ENCODE measurements at regions of chr11 and their contacts with region 1.

Region 1: DNA sequence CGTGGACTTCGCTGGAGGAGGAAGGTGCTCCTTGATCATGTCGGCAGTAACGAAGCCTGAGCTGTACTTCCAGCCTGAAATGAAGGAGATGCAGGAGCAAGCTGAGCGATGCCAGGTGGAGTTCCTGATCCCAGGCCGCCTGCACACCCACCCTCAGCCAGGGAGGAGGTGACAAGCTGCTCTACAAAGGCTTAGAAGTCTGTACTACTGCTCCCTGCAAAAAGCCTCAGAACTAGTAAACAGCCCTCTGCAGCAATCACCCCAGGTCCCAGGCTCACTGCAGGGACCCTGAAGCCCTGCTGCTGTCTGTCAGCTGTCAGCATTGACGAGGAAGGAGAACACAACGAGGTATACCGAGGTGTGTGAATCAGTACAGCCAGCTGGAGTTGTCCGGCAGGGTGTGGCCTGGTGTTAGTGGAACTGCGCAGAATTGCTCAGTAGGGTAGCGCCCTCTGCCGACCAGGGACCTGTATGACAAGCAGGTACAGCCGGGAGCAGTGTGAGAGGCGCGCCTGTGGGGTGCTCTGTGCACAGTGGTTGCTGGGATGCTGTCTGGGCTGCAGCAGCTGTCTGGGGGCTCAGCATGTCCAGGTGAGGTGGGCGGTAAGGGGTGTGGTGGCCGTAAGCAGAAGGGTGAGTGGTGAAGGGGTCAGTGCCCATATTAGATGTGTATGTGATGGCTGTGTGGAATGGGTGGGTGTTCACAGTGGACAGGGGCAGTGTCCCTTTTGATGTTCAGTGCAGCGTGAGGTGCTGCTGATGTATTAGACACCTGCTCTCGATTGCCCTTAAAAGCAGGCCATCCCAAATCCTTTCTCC is 7.6 kb downstream of the CYB5R2 start:
- DNase-seq: peak; percentile 85 to 92
- ATAC-seq: peak; percentile 94 to 99
- H3K4me3 ChIP-seq: no peak overlapping the region
- H3K27ac ChIP-seq: peak overlapping the region in 1 of 2 experiments; percentile 60; a peak in 3 of 6 replicates
- H3K4me1 ChIP-seq: peaks cover 4% of the 10 kb centered on the region; the same call in 2 of the 3 replicates
- CTCF ChIP-seq: peak; percentile 83
- EP300 ChIP-seq: no peak
- POLR2A ChIP-seq: no peak
- RAD21 ChIP-seq: peak; percentile 93 to 96

Region 2: DNA sequence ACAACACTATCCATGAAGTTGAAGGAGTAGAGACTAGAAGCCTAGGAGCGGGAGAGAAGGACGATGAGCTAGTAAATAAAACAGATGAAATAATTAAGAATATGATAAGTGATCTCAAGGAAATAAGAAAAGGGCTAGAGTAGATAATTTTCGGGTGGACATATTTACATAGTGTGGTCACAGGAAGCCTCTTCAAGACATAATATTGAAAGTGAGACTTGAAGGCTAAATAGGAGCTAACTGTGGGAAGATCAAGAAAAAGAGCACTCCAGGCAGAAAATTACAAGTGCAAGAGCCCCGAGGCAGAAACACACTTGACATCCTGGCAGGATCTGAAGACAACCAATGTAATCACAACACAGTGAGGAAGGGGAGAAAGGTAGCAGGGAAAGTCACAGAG is 163.8 kb before region 1 on chr11:
- CTCF ChIA-PET with region 1: interaction called, 10 read pairs
- POLR2A ChIA-PET with region 1: no interaction called
- DNase-seq: no peak
- ATAC-seq: no peak
- H3K4me3 ChIP-seq: no peak overlapping the region
- H3K27ac ChIP-seq: no peak overlapping the region
- H3K4me1 ChIP-seq: no peaks in the 10 kb centered on the region
- CTCF ChIP-seq: no peak
- EP300 ChIP-seq: no peak
- POLR2A ChIP-seq: no peak
- RAD21 ChIP-seq: no peak

Region 3: DNA sequence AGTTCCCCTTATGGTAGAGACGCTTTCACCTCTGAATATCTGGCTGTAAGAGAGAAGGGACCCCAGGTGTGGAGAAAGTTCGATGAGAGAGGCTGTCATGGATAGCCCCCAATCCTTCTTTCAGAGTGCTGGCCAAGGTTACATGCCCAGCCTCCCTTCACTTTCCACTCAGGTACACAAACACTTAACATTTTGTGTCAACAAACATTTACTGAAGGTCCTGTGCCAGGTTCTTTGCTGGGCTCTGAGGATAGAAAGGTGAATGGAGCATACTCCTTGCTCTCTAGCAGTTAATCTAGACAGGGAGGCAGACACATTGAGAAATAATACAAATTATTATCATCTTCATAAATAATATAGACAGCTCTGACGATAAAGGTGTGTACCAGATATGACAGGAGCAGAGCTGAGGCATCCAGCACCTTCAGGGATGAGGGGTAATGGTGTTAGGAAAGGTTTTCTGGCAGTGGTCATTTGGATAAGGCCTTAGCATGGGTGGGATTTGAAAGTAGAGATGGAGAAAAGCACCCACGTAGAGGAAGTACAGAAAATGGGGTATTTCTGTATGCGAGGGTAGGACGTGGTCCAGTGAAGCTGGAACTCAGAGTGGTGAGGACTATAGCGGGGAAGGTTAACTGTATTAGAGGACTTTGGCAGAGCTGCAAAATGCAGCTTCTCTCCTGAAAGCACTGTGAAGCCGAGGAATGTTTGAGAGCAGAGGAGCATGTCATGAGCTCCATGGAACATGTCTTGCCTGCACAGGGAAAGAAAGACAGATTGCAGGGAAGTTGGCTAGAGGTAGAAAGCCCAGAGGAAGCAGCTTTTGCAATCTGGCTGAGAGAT is 132.3 kb before region 1 on chr11:
- CTCF ChIA-PET with region 1: interaction called, 11 read pairs
- POLR2A ChIA-PET with region 1: no interaction called
- DNase-seq: no peak
- ATAC-seq: no peak
- H3K4me3 ChIP-seq: no peak overlapping the region
- H3K27ac ChIP-seq: no peak overlapping the region
- H3K4me1 ChIP-seq: no peaks in the 10 kb centered on the region
- CTCF ChIP-seq: no peak
- EP300 ChIP-seq: no peak
- POLR2A ChIP-seq: no peak
- RAD21 ChIP-seq: no peak

Region 4: DNA sequence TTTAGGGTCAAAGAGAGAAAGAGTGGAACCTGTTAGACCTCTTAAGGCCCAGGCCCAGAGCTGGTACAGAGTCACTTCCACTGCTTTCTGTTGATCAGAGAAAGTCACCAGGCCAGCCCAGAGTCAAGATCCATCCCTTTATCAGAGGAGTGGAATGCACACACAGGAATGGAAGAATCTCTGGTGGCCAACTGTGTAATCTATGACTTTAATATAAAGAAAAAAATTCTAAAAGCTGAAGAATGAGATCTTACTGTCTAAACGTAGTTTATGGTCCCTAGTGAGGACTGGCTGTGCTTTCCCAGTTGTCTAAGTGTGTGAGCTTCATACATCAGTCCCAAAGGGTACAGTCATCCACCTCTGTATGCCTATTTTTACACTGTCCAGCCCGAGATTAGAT is 100.9 kb before region 1 on chr11:
- CTCF ChIA-PET with region 1: interaction called, 209 read pairs
- POLR2A ChIA-PET with region 1: interaction called, 3 read pairs
- DNase-seq: no peak
- ATAC-seq: no peak
- H3K4me3 ChIP-seq: no peak overlapping the region
- H3K27ac ChIP-seq: no peak overlapping the region
- H3K4me1 ChIP-seq: no peaks in the 10 kb centered on the region
- CTCF ChIP-seq: no peak
- EP300 ChIP-seq: no peak
- POLR2A ChIP-seq: no peak
- RAD21 ChIP-seq: no peak

Region 5: GRCh38 chr11:7677071-7677470 is 11.4 kb after region 1 on chr11:
- CTCF ChIA-PET with region 1: interaction called, 40 read pairs
- POLR2A ChIA-PET with region 1: no interaction called
- DNase-seq: peak in 1 of 2 experiments; percentile 44
- ATAC-seq: peak in 1 of 2 experiments; percentile 16; a peak in 2 of 6 replicates
- H3K4me3 ChIP-seq: no peak overlapping the region
- H3K27ac ChIP-seq: no peak overlapping the region
- H3K4me1 ChIP-seq: peaks cover 13% of the 10 kb centered on the region; the same call in 1 of the 3 replicates
- CTCF ChIP-seq: no peak
- EP300 ChIP-seq: no peak
- POLR2A ChIP-seq: no peak
- RAD21 ChIP-seq: no peak

Measured in A549 (cell line).